ENCODE measurements at regions of chr16 and their contacts with region 1.

Region 1: GRCh38 chr16:8878521-8878911 is 3.6 kb upstream of the LITAFD start:
- H3K4me3 ChIP-seq: no peak overlapping the region
- H3K27ac ChIP-seq: no peak overlapping the region
- H3K4me1 ChIP-seq: no peaks in the 10 kb centered on the region
- CTCF ChIP-seq: no peak

Region 2: GRCh38 chr16:8660841-8661301 is 217.6 kb before region 1 on chr16:
- CTCF ChIA-PET with region 1: interaction called, 28 read pairs
- POLR2A ChIA-PET with region 1: no interaction called
- H3K4me3 ChIP-seq: no peak overlapping the region
- H3K27ac ChIP-seq: no peak overlapping the region
- H3K4me1 ChIP-seq: no peaks in the 10 kb centered on the region
- CTCF ChIP-seq: peak; percentile 90

Region 3: DNA sequence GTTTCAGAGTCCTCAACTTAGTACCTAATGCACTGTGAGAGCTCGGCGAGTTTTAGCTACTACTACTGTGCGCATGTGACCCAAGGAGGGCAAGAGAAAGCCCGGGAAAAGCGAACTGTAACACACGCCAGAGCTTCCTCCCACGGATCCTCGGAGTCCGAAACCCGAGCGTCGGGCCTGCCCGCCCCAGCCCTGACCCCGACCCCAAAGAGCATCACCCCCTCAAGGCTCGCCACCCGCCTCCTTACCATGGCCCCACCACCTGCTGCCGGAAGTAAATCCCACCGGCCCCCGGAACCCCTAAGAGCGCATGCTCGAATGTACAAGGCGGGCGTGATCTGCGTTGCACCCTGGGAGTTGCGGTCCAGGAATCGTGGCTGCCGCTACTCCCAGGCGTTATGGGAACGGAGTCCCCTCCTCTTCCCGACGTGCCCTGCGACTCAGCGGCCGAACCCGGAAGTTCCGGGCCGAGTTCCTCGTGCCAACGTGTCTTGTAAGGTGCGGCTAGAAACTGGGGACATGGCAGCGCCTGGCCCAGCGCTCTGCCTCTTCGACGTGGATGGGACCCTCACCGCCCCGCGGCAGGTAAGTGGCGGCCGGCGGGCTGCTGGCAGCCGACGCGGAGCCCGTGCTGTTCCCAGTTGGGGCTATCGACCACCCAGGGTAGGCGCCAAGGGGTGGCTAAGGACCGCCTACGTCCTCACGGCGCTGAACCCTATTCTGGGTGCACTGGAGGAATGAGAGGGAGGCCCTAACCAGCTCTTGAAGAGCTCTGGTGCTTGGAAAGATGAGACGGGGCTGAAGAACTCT is 80.9 kb before region 1 on chr16 and contains the starts of genes PMM2 and TMEM186:
- CTCF ChIA-PET with region 1: interaction called, 12 read pairs
- POLR2A ChIA-PET with region 1: interaction called, 3 read pairs
- H3K4me3 ChIP-seq: peak within 1 kb of the TSS; percentile 87
- H3K27ac ChIP-seq: peak within 1 kb of the TSS; percentile 40; the same call in 1 of the 2 replicates
- H3K4me1 ChIP-seq: no peaks in the 10 kb centered on the region
- CTCF ChIP-seq: no peak

Region 4: GRCh38 chr16:8855011-8855786 is 23.3 kb before region 1 on chr16:
- CTCF ChIA-PET with region 1: interaction called, 10 read pairs
- POLR2A ChIA-PET with region 1: interaction called, 3 read pairs
- H3K4me3 ChIP-seq: no peak overlapping the region
- H3K27ac ChIP-seq: no peak overlapping the region
- H3K4me1 ChIP-seq: no peaks in the 10 kb centered on the region
- CTCF ChIP-seq: 0 out of 2 replicates have a peak, but pooled peaks have one; percentile 24

Measured in HEK293 (cell line).